Activated CD4-positive, alpha-beta memory T cell treated with anti-CD3 and anti-CD28 coated beads for 36 hours (primary cell): ENCODE measurements at regions of chr10 and their contacts with region 1.

Region 1: DNA sequence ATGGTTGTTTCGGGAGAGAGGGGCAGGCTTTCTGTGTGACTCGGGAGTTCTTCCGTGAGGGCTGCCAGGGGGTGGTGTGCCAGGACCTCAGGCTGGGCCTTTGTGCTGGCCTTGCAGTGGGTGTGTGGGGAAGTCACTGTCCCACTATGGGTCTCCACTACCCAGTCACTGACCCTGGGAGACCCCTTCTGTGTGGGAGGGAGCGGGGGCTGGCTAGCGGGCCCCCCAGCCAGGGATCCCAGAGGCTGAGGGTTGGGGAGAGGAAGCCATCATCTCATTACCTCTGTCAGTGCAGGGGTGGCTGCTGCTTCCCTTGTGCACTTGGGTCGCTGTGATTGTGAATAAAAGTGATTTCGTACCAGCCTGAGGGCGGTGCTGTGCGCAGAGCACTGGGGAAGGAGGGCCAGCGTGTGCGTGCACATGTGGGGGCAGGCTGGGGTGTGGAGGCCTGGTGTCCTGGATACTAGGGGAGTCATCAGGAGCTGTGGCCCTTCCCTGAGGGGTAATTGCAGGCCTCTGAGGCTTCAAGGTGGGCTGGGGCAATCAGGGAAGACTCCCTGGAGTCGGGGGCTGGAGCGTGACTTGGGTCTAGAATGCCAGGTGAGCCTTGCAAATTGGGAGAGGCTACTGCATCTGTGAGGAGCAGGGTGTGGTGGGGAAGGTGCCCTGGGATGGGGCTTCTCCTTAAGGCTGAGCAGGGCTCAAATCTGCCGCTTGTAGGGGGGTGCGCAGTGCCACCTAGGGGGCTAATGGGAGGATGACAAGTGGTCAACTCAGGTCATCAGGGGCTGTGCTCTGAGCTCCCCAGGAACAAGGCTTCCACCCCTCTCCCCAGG is 98.9 kb downstream of the NEURL1 start:
- DNase-seq: peak; percentile 62
- H3K4me3 Mint-ChIP-seq: no peak overlapping the region
- H3K27ac Mint-ChIP-seq: no peak overlapping the region
- H3K4me1 Mint-ChIP-seq: no peaks in the 10 kb centered on the region
- H3K27me3 Mint-ChIP-seq: no peaks in the 10 kb centered on the region

Region 2: DNA sequence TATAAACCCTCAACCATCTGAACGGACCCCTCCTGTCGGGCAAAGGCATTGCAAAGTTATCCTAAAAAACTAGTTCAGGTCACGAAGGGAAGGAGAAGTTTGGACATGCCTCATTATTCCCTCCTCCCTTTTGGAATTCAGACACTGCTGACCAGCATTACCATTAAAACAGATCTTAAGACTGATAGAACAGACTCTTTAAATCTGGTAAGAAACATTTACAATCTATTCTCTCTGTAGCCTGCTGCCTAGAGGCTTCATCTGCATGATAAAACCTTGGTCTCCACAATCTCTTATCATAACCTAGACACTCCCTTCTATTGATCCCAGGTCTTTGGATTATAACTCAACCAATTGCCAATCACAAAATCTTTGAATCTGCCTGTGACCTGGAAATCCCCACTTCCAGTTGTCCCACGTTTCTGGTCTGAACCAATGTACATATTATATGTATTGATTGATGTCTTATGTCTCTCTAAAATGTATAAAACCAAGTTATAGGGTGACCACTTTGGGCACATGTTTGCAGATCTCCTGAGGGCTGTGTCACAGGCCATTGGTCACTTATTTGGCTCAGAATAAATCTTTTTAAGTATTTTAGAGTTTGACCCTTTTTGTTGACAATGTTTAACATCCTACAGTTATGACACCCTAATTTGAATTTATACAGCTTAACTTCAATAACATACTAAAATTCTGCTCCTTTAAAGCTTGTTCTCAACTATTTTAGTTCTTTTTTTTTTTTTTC is 697.8 kb before region 1 on chr10:
- CTCF ChIA-PET with region 1: no interaction called
- POLR2A ChIA-PET with region 1: no interaction called
- intact Hi-C with region 1: no loop called
- DNase-seq: no peak
- H3K4me3 Mint-ChIP-seq: no peak overlapping the region
- H3K27ac Mint-ChIP-seq: no peak overlapping the region
- H3K4me1 Mint-ChIP-seq: no peaks in the 10 kb centered on the region
- H3K27me3 Mint-ChIP-seq: no peaks in the 10 kb centered on the region

Region 3: DNA sequence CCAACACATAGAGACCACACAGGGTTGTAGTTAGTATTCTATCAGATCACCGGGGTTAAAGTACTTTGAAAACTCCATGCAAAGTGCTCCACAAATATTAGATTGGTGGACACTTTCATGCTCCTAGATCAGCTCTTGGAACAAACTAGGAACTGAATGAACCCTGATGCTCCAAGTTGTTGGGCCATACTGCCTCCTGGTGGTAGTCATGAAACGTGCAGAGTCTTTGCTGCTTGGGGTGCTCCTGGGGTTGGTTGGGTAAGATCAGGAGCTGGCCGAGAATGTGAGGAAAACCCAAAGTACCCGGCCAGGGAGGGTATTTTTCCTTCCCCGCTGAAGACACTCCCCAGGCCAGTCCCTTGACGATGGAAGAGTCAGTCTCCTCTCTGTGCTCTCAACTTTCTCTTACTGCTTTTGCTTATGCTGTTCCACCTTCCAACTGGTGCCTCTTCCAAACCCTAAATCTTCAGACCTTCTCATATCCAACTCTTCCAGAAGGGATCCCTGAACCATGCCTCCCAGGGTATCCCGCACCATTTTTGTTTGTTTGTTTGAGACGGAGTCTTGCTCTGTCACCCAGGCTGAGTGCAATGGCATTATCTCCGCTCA is 347.6 kb before region 1 on chr10:
- CTCF ChIA-PET with region 1: no interaction called
- POLR2A ChIA-PET with region 1: no interaction called
- intact Hi-C with region 1: no loop called
- DNase-seq: peak; percentile 77
- H3K4me3 Mint-ChIP-seq: no peak overlapping the region
- H3K27ac Mint-ChIP-seq: no peak overlapping the region
- H3K4me1 Mint-ChIP-seq: peaks cover 9% of the 10 kb centered on the region
- H3K27me3 Mint-ChIP-seq: no peaks in the 10 kb centered on the region

Region 4: DNA sequence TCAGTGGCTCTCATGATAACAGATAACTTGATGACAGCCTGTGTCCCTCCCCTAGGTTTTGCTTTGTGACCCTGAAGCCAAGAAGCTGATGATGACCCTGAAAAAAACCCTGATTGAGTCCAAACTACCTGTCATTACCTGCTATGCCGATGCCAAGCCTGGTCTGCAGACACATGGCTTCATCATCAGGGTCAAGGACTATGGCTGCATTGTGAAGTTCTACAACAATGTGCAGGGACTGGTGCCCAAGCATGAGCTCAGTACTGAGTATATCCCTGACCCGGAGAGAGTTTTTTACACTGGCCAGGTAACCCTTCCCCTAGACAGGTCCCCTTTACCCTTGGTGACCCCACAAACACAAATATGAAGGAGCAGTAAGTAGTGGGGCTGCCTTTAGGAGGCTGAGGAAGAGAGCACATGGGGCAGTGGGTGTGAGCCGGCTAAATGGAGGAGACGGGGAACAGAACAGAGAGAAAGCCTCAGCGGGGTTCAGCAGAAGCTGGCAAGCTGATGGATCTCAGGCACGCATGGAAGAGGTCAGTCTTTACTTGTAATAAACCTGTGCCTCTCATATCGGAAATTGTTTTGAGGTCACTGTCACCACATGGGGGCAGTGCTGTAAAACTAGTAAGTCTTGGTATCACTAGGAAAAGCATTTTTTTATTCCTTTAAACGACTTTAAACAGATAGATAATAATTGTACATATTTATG is 175.8 kb before region 1 on chr10:
- CTCF ChIA-PET with region 1: interaction called, 15 read pairs
- POLR2A ChIA-PET with region 1: no interaction called
- intact Hi-C with region 1: no loop called
- DNase-seq: peak; percentile 61
- H3K4me3 Mint-ChIP-seq: no peak overlapping the region
- H3K27ac Mint-ChIP-seq: no peak overlapping the region
- H3K4me1 Mint-ChIP-seq: no peaks in the 10 kb centered on the region
- H3K27me3 Mint-ChIP-seq: no peaks in the 10 kb centered on the region

Region 5: GRCh38 chr10:103576862-103577261 is 15.5 kb before region 1 on chr10:
- CTCF ChIA-PET with region 1: interaction called, 12 read pairs
- POLR2A ChIA-PET with region 1: no interaction called
- intact Hi-C with region 1: no loop called
- DNase-seq: no peak
- H3K4me3 Mint-ChIP-seq: no peak overlapping the region
- H3K27ac Mint-ChIP-seq: no peak overlapping the region
- H3K4me1 Mint-ChIP-seq: no peaks in the 10 kb centered on the region
- H3K27me3 Mint-ChIP-seq: peaks cover 5% of the 10 kb centered on the region

Region 6: GRCh38 chr10:103612462-103613365 is 20.3 kb after region 1 on chr10:
- CTCF ChIA-PET with region 1: interaction called, 20 read pairs
- POLR2A ChIA-PET with region 1: no interaction called
- intact Hi-C with region 1: no loop called
- DNase-seq: no peak
- H3K4me3 Mint-ChIP-seq: no peak overlapping the region
- H3K27ac Mint-ChIP-seq: no peak overlapping the region
- H3K4me1 Mint-ChIP-seq: no peaks in the 10 kb centered on the region
- H3K27me3 Mint-ChIP-seq: no peaks in the 10 kb centered on the region

Region 7: DNA sequence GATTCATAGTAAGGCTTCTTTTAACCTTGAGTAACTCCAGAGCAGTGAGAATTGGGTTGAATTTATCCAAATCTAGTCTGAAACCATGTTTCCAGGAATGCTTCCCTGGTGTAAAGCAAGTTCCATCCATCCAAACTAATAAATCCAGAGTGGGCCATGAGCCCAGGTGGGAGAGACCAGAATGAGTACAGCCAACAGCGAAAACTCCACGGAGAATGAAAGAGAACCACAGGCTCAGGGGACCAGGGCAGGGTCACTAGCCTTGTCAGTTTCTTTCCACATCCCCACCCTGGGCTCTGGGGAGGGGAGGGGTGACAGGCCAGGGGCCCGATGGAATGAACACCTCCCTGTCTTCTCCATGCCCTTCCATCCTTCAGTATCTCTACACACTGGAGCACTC is 81.2 kb after region 1 on chr10:
- CTCF ChIA-PET with region 1: no interaction called
- POLR2A ChIA-PET with region 1: no interaction called
- intact Hi-C with region 1: no loop called
- DNase-seq: no peak
- H3K4me3 Mint-ChIP-seq: no peak overlapping the region
- H3K27ac Mint-ChIP-seq: no peak overlapping the region
- H3K4me1 Mint-ChIP-seq: peaks cover 23% of the 10 kb centered on the region
- H3K27me3 Mint-ChIP-seq: no peaks in the 10 kb centered on the region